Dendritic cell treated with granulocyte-macrophage colony-stimulating factor and Interleukin-4, amounts not matched to agents 40 ng/mL and 50 ng/mL, for 4 days (primary cell): ENCODE measurements at regions of chr18 and their contacts with region 1.

Region 1: DNA sequence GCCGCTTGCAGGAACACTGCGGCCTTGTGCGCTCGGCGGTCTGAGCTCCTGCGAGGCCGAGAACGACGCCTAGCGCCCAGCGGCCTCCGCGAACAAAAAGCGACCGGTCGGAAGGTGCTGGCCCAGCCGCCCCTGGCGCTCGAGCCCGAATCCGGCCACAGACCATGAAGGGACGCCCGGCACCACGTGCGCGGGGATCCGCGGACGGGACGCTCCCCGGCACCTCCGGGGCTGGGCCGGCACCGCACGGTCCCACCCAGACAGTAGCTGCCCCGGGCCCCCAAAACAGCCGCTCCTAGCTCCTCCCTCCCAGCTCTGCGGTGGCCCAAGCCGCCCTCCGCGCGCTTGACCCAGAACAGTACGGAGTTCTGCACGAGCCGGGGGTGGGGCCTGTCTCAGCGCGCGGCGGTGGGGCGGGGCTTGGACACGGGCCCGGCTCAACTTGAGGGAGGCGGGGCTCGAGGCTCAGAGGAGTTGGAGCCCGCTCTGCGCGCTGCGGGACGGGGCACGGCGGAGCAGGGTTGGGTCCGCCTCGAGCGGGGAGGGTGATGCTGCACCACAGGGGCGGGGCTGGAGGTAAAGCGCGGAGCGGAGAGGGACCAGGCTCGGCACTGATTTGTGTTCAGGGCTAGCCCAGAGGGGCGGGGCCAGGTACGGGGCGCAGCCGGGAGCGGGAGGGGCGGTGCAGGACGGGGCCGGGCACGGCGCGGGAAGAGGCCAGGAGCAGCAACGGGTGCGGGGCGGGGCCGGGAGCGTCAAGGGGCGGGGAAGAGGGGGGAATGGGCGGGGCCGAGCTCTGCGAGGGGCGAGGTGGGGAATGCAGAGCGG is 538 bp upstream of the IMPA2 start:
- H3K4me3 Mint-ChIP-seq: peak overlapping the region; percentile 86
- H3K27ac Mint-ChIP-seq: peak overlapping the region; percentile 86
- H3K4me1 Mint-ChIP-seq: peaks cover 47% of the 10 kb centered on the region
- H3K27me3 Mint-ChIP-seq: no peaks in the 10 kb centered on the region

Region 2: GRCh38 chr18:11947214-11948191 is 33.3 kb before region 1 on chr18:
- intact Hi-C with region 1: loop called (anchors 2 kb)
- H3K4me3 Mint-ChIP-seq: peak overlapping the region; percentile 79
- H3K27ac Mint-ChIP-seq: peak overlapping the region; percentile 34
- H3K4me1 Mint-ChIP-seq: peaks cover 20% of the 10 kb centered on the region
- H3K27me3 Mint-ChIP-seq: peaks cover 1% of the 10 kb centered on the region

Region 3: DNA sequence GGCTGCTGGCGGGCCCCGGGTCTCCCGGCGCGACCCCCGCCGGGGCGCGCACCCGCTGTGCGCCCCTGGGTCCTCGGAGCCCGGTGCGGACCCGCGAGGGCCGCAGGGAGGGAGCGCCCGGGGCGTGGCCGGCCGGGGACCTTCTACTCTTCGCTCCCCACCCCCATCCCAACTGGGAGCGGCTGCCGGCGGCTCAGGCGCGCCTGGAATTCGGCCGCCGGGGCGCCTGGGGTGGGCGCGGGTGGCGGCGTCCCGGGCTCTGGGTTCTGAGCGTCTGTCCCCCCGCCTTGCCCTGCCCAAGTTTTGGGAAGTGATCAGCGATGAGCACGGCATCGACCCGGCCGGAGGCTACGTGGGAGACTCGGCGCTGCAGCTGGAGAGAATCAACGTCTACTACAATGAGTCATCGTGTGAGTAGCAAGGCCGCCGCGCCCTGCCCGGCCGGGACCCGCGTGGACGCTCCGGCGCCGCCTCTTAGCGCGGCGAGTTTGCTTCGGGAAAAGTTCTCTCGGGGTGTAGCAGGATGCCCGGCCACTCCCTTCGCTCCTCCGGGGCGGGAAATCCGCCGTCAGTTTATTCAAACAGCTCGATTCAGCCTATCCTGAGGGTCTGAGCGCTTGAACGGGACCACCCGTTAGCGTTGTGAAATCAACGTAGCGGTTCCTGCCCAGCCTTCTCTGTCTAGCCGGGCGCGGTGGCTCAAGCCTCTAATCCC is 327.8 kb after region 1 on chr18:
- intact Hi-C with region 1: loop called (anchors 5 kb)
- H3K4me3 Mint-ChIP-seq: peak overlapping the region; percentile 77
- H3K27ac Mint-ChIP-seq: peak overlapping the region; percentile 91
- H3K4me1 Mint-ChIP-seq: peaks cover 49% of the 10 kb centered on the region
- H3K27me3 Mint-ChIP-seq: peaks cover 24% of the 10 kb centered on the region